GM12878 (cell line): ENCODE measurements at regions of chr3 and their contacts with region 1.

Region 1: GRCh38 chr3:17655743-17656142 is 86.7 kb downstream of the TBC1D5 start:
- DNase-seq: no peak
- ATAC-seq: peak; percentile 93
- H3K4me3 ChIP-seq: peak overlapping the region; percentile 10; the same call in 1 of the 2 replicates
- H3K27ac ChIP-seq: no peak overlapping the region
- H3K4me1 ChIP-seq: peaks cover 9% of the 10 kb centered on the region
- H3K27me3 ChIP-seq: no peaks in the 10 kb centered on the region
- CTCF ChIP-seq: no peak
- EP300 ChIP-seq: no peak
- POLR2A ChIP-seq: no peak
- RAD21 ChIP-seq: no peak

Region 2: GRCh38 chr3:17442332-17443049 is 213.3 kb before region 1 on chr3:
- CTCF ChIA-PET with region 1: no interaction called
- POLR2A ChIA-PET with region 1: no interaction called
- RAD21 ChIA-PET with region 1: no interaction called
- SMC1A ChIA-PET with region 1: no interaction called
- in situ Hi-C with region 1: no loop called
- intact Hi-C with region 1: no loop called
- DNase-seq: no peak
- ATAC-seq: no peak
- H3K4me3 ChIP-seq: no peak overlapping the region
- H3K27ac ChIP-seq: no peak overlapping the region
- H3K4me1 ChIP-seq: no peaks in the 10 kb centered on the region
- H3K27me3 ChIP-seq: no peaks in the 10 kb centered on the region
- CTCF ChIP-seq: no peak
- EP300 ChIP-seq: no peak
- POLR2A ChIP-seq: no peak
- RAD21 ChIP-seq: no peak

Region 3: GRCh38 chr3:17629400-17629799 is 26.3 kb before region 1 on chr3:
- CTCF ChIA-PET with region 1: no interaction called
- POLR2A ChIA-PET with region 1: no interaction called
- RAD21 ChIA-PET with region 1: no interaction called
- SMC1A ChIA-PET with region 1: no interaction called
- in situ Hi-C with region 1: no loop called
- intact Hi-C with region 1: loop called (anchors 1 kb)
- DNase-seq: no peak
- ATAC-seq: no peak
- H3K4me3 ChIP-seq: no peak overlapping the region
- H3K27ac ChIP-seq: no peak overlapping the region
- H3K4me1 ChIP-seq: no peaks in the 10 kb centered on the region
- H3K27me3 ChIP-seq: no peaks in the 10 kb centered on the region
- CTCF ChIP-seq: no peak
- EP300 ChIP-seq: no peak
- POLR2A ChIP-seq: no peak
- RAD21 ChIP-seq: no peak

Region 4: GRCh38 chr3:17670749-17671148 is 15.0 kb after region 1 on chr3:
- CTCF ChIA-PET with region 1: interaction called, 4 read pairs
- POLR2A ChIA-PET with region 1: no interaction called
- RAD21 ChIA-PET with region 1: no interaction called
- SMC1A ChIA-PET with region 1: interaction called, 17 read pairs
- in situ Hi-C with region 1: no loop called
- intact Hi-C with region 1: no loop called
- DNase-seq: no peak
- ATAC-seq: no peak
- H3K4me3 ChIP-seq: no peak overlapping the region
- H3K27ac ChIP-seq: no peak overlapping the region
- H3K4me1 ChIP-seq: no peaks in the 10 kb centered on the region
- H3K27me3 ChIP-seq: no peaks in the 10 kb centered on the region
- CTCF ChIP-seq: no peak
- EP300 ChIP-seq: no peak
- POLR2A ChIP-seq: no peak
- RAD21 ChIP-seq: no peak